Activated CD8-positive, alpha-beta T cell treated with anti-CD3 and anti-CD28 coated beads for 36 hours (primary cell): ENCODE measurements at regions of chr15 and their contacts with region 1.

Region 1: GRCh38 chr15:38683382-38684242 is 119.0 kb upstream of the RASGRP1 start:
- DNase-seq: peak; percentile 85
- ATAC-seq: peak; percentile 77
- H3K4me3 Mint-ChIP-seq: no peak overlapping the region
- H3K27ac Mint-ChIP-seq: peak overlapping the region; percentile 94
- H3K4me1 Mint-ChIP-seq: peaks cover 73% of the 10 kb centered on the region
- H3K27me3 Mint-ChIP-seq: no peaks in the 10 kb centered on the region
- CTCF ChIP-seq: peak; percentile 90

Region 2: GRCh38 chr15:38474155-38474757 is 209.4 kb before region 1 on chr15:
- CTCF ChIA-PET with region 1: interaction called, 108 read pairs
- POLR2A ChIA-PET with region 1: interaction called, 4 read pairs
- intact Hi-C with region 1: no loop called
- DNase-seq: peak; percentile 24
- ATAC-seq: peak; percentile 97
- H3K4me3 Mint-ChIP-seq: no peak overlapping the region
- H3K27ac Mint-ChIP-seq: no peak overlapping the region
- H3K4me1 Mint-ChIP-seq: peaks cover 2% of the 10 kb centered on the region
- H3K27me3 Mint-ChIP-seq: no peaks in the 10 kb centered on the region
- CTCF ChIP-seq: peak; percentile 79

Region 3: DNA sequence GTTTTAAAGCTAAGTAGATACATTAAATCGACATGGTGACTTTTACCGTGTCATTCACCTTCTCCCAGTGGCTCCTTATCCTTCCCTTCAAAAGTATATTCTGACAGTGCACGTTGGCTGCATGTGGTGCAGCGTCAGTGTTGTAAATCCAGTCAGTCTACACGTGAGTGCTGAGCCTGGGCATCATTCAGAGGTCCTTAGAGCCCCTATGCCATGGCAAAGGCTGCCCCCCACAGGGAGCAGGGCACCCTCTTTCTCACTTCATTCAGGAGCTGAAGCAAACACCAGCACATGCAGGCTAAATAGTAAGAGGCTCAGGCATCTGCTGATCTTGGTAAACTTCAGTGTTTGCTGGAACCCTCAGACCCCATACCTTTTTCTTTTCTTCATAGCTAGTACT is 162.3 kb before region 1 on chr15:
- CTCF ChIA-PET with region 1: interaction called, 57 read pairs
- POLR2A ChIA-PET with region 1: interaction called, 4 read pairs
- intact Hi-C with region 1: no loop called
- DNase-seq: no peak
- ATAC-seq: no peak
- H3K4me3 Mint-ChIP-seq: no peak overlapping the region
- H3K27ac Mint-ChIP-seq: peak overlapping the region; percentile 72
- H3K4me1 Mint-ChIP-seq: peaks cover 70% of the 10 kb centered on the region
- H3K27me3 Mint-ChIP-seq: no peaks in the 10 kb centered on the region
- CTCF ChIP-seq: no peak

Region 4: GRCh38 chr15:38554354-38554753 is 129.3 kb before region 1 on chr15:
- CTCF ChIA-PET with region 1: interaction called, 464 read pairs
- POLR2A ChIA-PET with region 1: interaction called, 192 read pairs
- intact Hi-C with region 1: no loop called
- DNase-seq: peak; percentile 67
- ATAC-seq: peak; percentile 73
- H3K4me3 Mint-ChIP-seq: peak overlapping the region; percentile 54
- H3K27ac Mint-ChIP-seq: peak overlapping the region; percentile 96
- H3K4me1 Mint-ChIP-seq: peaks cover 88% of the 10 kb centered on the region
- H3K27me3 Mint-ChIP-seq: no peaks in the 10 kb centered on the region
- CTCF ChIP-seq: no peak

Region 5: GRCh38 chr15:38624244-38625205 is 59.1 kb before region 1 on chr15:
- CTCF ChIA-PET with region 1: interaction called, 11 read pairs
- POLR2A ChIA-PET with region 1: interaction called, 5 read pairs
- intact Hi-C with region 1: no loop called
- DNase-seq: no peak
- ATAC-seq: no peak
- H3K4me3 Mint-ChIP-seq: no peak overlapping the region
- H3K27ac Mint-ChIP-seq: no peak overlapping the region
- H3K4me1 Mint-ChIP-seq: peaks cover 33% of the 10 kb centered on the region
- H3K27me3 Mint-ChIP-seq: no peaks in the 10 kb centered on the region
- CTCF ChIP-seq: no peak

Region 6: GRCh38 chr15:38660738-38661137 is 22.9 kb before region 1 on chr15:
- CTCF ChIA-PET with region 1: interaction called, 97 read pairs
- POLR2A ChIA-PET with region 1: interaction called, 5 read pairs
- intact Hi-C with region 1: no loop called
- DNase-seq: peak; percentile 61
- ATAC-seq: peak; percentile 88
- H3K4me3 Mint-ChIP-seq: peak overlapping the region; percentile 33
- H3K27ac Mint-ChIP-seq: peak overlapping the region; percentile 73
- H3K4me1 Mint-ChIP-seq: peaks cover 64% of the 10 kb centered on the region
- H3K27me3 Mint-ChIP-seq: no peaks in the 10 kb centered on the region
- CTCF ChIP-seq: no peak